Vagina (tissue), 2 donors: ENCODE measurements at regions of chr7 and their contacts with region 1.

Region 1: DNA sequence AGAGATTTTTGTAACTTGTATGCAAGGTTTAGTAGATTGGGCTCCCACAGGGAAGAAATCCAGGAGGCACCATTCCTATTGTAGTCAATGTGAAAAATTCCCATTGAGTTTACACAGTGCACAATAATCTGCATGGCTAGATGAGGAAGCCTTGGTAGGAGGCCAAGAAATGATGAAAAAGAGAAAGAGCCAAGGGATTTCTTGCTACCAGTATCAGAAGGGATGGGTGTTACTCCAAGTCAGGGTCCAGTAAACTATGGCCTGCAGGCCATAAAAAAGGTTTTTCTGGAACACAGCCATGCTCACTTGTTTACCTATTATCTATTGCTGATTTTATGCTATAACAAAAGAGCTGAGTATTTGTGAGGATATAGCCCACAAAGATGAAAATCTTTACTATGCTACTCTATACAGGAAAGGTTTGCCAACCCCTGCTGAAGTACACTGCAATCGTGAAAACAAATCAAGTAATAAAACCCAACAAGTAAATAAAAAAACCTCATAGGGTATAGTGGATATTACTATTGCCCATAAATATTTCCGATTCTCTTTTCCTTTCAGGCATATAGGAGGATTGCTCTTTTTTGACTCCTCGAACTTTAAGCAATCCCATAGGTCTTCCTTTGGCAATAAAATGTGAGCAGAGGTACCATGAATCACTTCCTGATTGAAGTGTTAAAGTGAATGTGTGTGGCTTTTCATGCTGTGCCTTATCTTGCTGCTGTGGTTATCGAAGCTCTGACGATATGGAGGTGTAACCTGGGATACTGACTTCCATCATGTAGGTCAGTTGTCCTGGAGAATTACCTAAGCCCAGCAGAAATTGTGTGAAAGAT is 256.3 kb upstream of the MAGI2 start:
- DNase-seq: no peak
- H3K4me3 ChIP-seq: no peak overlapping the region
- H3K27ac ChIP-seq: no peak overlapping the region
- H3K4me1 ChIP-seq: no peaks in the 10 kb centered on the region
- H3K27me3 ChIP-seq: no peaks in the 10 kb centered on the region
- CTCF ChIP-seq: no peak
- POLR2A ChIP-seq: no peak

Region 2: GRCh38 chr7:78465894-78466293 is 1243.9 kb before region 1 on chr7:
- intact Hi-C with region 1: loop called (anchors 10 kb)
- DNase-seq: no peak
- H3K4me3 ChIP-seq: no peak overlapping the region
- H3K27ac ChIP-seq: no peak overlapping the region
- H3K4me1 ChIP-seq: no peaks in the 10 kb centered on the region
- H3K27me3 ChIP-seq: no peaks in the 10 kb centered on the region
- CTCF ChIP-seq: no peak
- POLR2A ChIP-seq: no peak